ENCODE measurements at regions of chr15 and their contacts with region 1.

Region 1: DNA sequence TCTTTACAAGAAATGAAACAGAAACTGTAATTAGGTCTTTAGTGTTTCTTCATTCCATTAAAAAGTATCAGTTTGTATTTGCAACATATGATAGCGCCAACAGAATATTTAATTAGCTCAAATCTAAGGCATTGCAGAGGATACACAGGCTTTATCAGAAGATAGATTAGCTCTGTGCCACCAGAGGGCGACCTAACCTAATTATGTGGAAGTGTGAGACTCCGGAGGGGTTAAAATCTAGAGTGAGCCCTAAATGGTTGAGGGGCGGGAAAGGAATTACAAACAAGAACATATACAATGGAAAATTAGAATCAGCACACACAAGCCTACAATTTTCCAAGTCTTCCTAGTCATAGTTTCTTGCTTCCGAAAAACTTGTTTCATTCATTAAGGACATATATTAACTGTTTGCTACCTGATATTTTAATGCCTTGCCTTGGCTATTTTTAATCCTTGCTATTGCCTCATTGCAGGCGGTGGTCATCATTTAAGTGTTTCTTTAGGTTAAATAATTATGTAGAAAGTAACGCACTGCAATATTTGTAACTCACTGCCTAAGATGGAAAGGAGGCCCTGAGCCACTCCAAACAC is 18.0 kb upstream of the RYR3 start:
- DNase-seq: peak; percentile 41 to 52
- H3K4me3 ChIP-seq: no peak overlapping the region
- H3K27ac ChIP-seq: no peak overlapping the region
- H3K4me1 ChIP-seq: peaks cover 24% of the 10 kb centered on the region
- H3K27me3 ChIP-seq: no peaks in the 10 kb centered on the region
- CTCF ChIP-seq: peak; percentile 84

Region 2: DNA sequence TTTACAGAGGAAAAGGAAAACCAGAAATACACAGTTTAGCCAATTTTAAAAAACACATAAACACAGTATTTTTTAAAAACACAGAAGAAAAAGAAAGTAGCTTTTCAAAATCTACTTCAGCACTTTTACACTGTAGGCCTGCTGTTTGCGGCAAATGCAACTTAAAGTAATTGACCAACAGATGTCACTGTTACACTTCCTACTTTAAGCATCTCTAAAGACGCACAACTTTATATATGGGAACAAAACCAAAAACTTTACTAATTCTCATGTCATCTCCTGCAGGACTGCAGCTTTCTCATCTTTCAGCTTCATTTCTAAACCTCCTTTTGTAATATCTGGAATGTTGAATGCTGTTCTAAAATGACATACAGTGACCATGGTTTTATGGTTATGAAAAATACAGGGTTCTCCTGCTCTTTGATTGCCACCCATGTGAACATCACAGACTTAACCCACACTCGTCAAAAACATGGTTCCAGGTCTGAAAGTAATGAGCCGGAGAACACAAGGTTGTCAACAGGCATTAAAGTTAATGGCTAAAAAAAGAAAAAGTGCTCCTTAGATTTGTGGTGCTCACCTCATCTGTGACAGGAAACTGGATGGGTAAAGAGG is 206.2 kb before region 1 on chr15:
- CTCF ChIA-PET with region 1: no interaction called
- POLR2A ChIA-PET with region 1: interaction called, 3 read pairs
- intact Hi-C with region 1: loop called (anchors 2 kb)
- DNase-seq: peak in 1 of 2 experiments; percentile 51
- H3K4me3 ChIP-seq: no peak overlapping the region
- H3K27ac ChIP-seq: no peak overlapping the region
- H3K4me1 ChIP-seq: peaks cover 42% of the 10 kb centered on the region
- H3K27me3 ChIP-seq: no peaks in the 10 kb centered on the region
- CTCF ChIP-seq: peak; percentile 64

Region 3: GRCh38 chr15:33234014-33234461 is 58.8 kb before region 1 on chr15:
- CTCF ChIA-PET with region 1: interaction called, 3 read pairs
- POLR2A ChIA-PET with region 1: no interaction called
- intact Hi-C with region 1: loop called (anchors 1 kb)
- DNase-seq: peak; percentile 20 to 46
- H3K4me3 ChIP-seq: no peak overlapping the region
- H3K27ac ChIP-seq: no peak overlapping the region
- H3K4me1 ChIP-seq: peaks cover 13% of the 10 kb centered on the region
- H3K27me3 ChIP-seq: no peaks in the 10 kb centered on the region
- CTCF ChIP-seq: peak; percentile 72

Region 4: GRCh38 chr15:33448961-33449606 is 156.3 kb after region 1 on chr15:
- CTCF ChIA-PET with region 1: no interaction called
- POLR2A ChIA-PET with region 1: no interaction called
- intact Hi-C with region 1: loop called (anchors 5 kb)
- DNase-seq: peak; percentile 70 to 89
- H3K4me3 ChIP-seq: peak overlapping the region; percentile 42; the same call in 1 of the 2 replicates
- H3K27ac ChIP-seq: peak overlapping the region; percentile 95
- H3K4me1 ChIP-seq: peaks cover 21% of the 10 kb centered on the region
- H3K27me3 ChIP-seq: no peaks in the 10 kb centered on the region
- CTCF ChIP-seq: no peak

Region 5: GRCh38 chr15:33547876-33548275 is 255.1 kb after region 1 on chr15:
- CTCF ChIA-PET with region 1: no interaction called
- POLR2A ChIA-PET with region 1: no interaction called
- intact Hi-C with region 1: loop called (anchors 10 kb)
- DNase-seq: peak in 1 of 2 experiments; percentile 46
- H3K4me3 ChIP-seq: no peak overlapping the region
- H3K27ac ChIP-seq: no peak overlapping the region
- H3K4me1 ChIP-seq: no peaks in the 10 kb centered on the region
- H3K27me3 ChIP-seq: no peaks in the 10 kb centered on the region
- CTCF ChIP-seq: no peak

Region 6: DNA sequence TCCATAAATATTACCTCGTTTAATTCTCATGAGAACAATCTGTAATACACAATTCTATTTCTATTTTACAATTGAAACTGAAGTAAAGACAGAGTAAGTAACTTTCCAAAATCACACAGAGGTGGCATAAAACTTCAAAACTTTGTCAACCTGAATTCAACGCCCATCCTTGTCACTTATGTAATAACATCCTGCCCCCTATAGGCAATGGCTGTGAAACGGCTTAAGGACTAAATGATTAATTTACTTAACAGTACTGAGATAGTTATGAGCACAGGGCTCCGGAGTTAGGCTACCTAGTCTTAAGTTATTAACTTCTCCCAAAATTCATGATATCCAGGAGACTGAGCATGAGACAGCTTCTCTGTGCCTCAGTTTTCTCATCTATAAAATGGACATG is 382.4 kb after region 1 on chr15:
- CTCF ChIA-PET with region 1: interaction called, 4 read pairs
- POLR2A ChIA-PET with region 1: no interaction called
- intact Hi-C with region 1: loop called (anchors 1 kb)
- DNase-seq: no peak
- H3K4me3 ChIP-seq: no peak overlapping the region
- H3K27ac ChIP-seq: no peak overlapping the region
- H3K4me1 ChIP-seq: no peaks in the 10 kb centered on the region
- H3K27me3 ChIP-seq: no peaks in the 10 kb centered on the region
- CTCF ChIP-seq: peak; percentile 63

Region 7: DNA sequence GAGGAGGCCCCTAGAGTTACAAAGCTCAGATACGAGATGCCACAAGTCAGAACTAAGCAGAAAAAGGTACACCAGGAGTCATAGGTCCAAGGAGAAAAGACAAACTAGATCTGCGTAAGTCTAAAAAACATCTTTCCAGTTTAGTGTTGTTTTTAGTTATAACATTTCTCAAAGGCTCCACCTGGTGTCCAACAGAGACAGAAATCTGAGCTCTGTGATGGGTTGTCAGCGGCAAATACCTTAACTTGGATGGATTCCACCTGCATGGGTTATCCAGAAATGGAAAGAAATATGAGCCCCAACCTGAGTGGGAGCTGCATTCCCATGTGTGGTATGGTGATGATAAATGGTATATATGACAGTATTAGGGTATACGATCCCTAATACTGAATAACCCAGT is 436.8 kb after region 1 on chr15:
- CTCF ChIA-PET with region 1: interaction called, 5 read pairs
- POLR2A ChIA-PET with region 1: no interaction called
- intact Hi-C with region 1: loop called (anchors 1 kb)
- DNase-seq: peak in 1 of 2 experiments; percentile 6
- H3K4me3 ChIP-seq: no peak overlapping the region
- H3K27ac ChIP-seq: no peak overlapping the region
- H3K4me1 ChIP-seq: no peaks in the 10 kb centered on the region
- H3K27me3 ChIP-seq: no peaks in the 10 kb centered on the region
- CTCF ChIP-seq: no peak; the same call in 1 of the 2 replicates

Region 8: DNA sequence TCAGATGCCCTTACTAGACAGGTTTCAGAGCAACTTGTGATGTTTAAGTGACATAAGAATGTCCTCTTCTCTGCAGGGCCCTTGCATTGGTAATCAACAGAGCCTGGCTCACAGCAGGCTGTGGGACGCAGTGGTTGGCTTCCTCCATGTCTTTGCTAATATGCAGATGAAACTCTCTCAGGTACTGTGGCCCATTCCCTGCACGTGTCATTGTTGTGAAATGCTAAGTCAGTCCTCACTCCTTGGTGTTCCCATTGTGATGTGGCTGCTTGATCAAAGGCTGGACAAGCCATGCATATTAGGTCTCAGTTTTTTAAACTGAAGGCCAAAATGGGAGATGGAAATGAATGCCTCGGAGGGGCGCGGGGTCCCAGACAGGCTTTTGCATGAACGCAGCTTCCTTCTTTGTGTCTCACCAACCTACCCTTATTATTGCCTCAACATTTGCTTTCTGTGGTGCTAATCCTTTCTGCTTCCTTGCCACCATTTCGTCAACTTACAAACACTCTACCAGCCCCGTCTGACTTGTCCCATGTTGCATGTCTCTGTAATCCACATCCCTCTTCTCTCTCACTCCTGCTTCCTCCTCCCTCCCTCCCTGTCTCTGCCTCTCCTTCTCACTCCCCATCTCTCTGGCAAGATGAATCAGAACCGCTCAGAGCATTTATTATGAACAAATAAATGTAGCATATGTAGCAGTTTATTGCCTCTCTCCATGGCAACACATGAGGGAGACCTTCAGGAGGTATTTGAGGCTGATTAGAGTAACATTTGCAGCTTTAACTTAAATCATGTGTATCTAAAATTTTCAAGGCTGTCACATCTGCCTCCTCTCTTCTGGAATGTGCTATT is 542.3 kb after region 1 on chr15:
- CTCF ChIA-PET with region 1: no interaction called
- POLR2A ChIA-PET with region 1: no interaction called
- intact Hi-C with region 1: no loop called
- DNase-seq: no peak
- H3K4me3 ChIP-seq: no peak overlapping the region
- H3K27ac ChIP-seq: no peak overlapping the region
- H3K4me1 ChIP-seq: no peaks in the 10 kb centered on the region
- H3K27me3 ChIP-seq: no peaks in the 10 kb centered on the region
- CTCF ChIP-seq: no peak